Activated naive CD4-positive, alpha-beta T cell treated with anti-CD3 and anti-CD28 coated beads for 36 hours (primary cell): ENCODE measurements at regions of chr3 and their contacts with region 1.

Region 1: GRCh38 chr3:136752422-136753325 is 496 bp upstream of the STAG1 start:
- DNase-seq: peak; percentile 99
- H3K4me3 Mint-ChIP-seq: peak overlapping the region; percentile 86
- H3K27ac Mint-ChIP-seq: peak overlapping the region; percentile 97
- H3K4me1 Mint-ChIP-seq: peaks cover 29% of the 10 kb centered on the region
- H3K27me3 Mint-ChIP-seq: no peaks in the 10 kb centered on the region

Region 2: DNA sequence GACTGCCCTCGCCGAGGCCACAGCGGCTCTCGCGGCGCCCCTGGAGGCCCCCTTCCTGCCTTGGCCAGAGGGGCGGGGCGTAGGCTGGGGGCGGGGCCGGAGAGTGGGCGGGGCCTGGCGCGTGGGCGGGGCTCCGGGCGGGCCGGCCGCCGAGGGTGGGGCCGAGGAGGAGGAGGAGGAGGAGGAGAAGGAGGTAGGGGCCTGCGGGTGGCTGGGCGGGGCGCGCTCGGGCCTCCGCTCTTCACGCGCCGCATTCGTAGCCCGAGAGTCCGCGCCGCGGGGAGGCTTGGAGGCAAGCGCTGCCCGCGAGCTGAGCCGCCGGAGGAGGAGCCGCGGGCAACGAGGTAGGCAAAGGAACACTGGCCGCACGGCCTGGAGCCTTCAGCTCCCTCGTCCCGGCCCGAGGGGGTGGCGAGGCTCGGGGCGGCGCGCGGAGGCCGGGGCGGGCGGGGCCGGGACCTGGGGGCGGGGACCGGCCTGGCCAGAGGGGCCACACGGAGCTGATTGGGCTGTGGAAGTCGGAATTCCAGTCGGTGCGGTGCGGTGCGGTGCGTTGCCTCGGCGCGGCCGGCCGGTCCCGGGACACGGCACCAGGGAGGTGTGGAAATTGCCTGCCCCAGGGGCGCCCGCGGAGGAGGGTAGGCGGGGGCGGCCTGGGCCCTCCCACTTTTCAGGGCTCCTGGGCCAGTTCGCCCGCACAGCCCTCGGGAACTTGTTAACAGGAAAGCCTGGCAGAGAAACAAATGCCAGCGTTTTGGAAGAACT is 787.0 kb before region 1 on chr3 and contains the start of gene PPP2R3A:
- CTCF ChIA-PET with region 1: interaction called, 3 read pairs
- intact Hi-C with region 1: loop called (anchors 1 kb)
- DNase-seq: peak; percentile 70
- H3K4me3 Mint-ChIP-seq: peak within 1 kb of the TSS; percentile 74
- H3K27ac Mint-ChIP-seq: no peak within 1 kb of the TSS
- H3K4me1 Mint-ChIP-seq: peaks cover 8% of the 10 kb centered on the region
- H3K27me3 Mint-ChIP-seq: peaks cover 37% of the 10 kb centered on the region
- total RNA-seq, gene PPP2R3A: 0.17 TPM

Region 3: GRCh38 chr3:136250226-136250902 is 502.3 kb before region 1 on chr3 and contains the start of gene PCCB:
- CTCF ChIA-PET with region 1: no interaction called
- intact Hi-C with region 1: loop called (anchors 1 kb)
- DNase-seq: peak; percentile 95
- H3K4me3 Mint-ChIP-seq: peak within 1 kb of the TSS; percentile 83
- H3K27ac Mint-ChIP-seq: peak within 1 kb of the TSS; percentile 90
- H3K4me1 Mint-ChIP-seq: peaks cover 18% of the 10 kb centered on the region
- H3K27me3 Mint-ChIP-seq: no peaks in the 10 kb centered on the region
- total RNA-seq, gene PCCB: 86.0 to 87.6 TPM

Region 4: DNA sequence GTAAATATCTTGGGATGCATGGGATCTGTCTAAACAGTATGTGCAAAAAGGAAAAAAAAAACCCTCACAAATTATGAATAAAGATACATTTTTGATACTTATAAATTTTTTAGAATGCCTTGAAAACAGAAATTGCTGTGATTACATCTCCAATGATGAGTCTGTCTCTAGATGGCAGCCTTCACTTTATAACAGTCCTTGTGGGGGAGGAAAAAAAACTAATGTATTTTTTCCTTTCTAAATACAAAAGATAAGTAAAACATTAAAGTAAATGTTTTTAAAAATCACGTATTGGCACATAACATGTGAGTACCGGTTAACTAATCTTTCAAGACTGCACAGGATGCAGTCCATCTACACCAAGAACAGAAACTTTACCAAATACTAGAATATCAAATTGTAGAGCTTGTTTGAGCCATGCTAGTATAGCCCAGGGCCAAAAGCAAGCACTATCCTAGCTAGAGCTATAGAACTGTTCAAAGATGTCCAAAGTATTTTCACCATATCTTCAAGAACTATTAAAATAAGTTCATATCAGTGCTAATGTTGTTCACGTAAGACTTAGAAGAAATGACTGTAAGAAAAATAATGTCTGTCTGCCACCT is 206.9 kb before region 1 on chr3:
- CTCF ChIA-PET with region 1: interaction called, 6 read pairs
- intact Hi-C with region 1: loop called (anchors 1 kb)
- DNase-seq: no peak
- H3K4me3 Mint-ChIP-seq: no peak overlapping the region
- H3K27ac Mint-ChIP-seq: no peak overlapping the region
- H3K4me1 Mint-ChIP-seq: peaks cover 12% of the 10 kb centered on the region
- H3K27me3 Mint-ChIP-seq: no peaks in the 10 kb centered on the region

Region 5: DNA sequence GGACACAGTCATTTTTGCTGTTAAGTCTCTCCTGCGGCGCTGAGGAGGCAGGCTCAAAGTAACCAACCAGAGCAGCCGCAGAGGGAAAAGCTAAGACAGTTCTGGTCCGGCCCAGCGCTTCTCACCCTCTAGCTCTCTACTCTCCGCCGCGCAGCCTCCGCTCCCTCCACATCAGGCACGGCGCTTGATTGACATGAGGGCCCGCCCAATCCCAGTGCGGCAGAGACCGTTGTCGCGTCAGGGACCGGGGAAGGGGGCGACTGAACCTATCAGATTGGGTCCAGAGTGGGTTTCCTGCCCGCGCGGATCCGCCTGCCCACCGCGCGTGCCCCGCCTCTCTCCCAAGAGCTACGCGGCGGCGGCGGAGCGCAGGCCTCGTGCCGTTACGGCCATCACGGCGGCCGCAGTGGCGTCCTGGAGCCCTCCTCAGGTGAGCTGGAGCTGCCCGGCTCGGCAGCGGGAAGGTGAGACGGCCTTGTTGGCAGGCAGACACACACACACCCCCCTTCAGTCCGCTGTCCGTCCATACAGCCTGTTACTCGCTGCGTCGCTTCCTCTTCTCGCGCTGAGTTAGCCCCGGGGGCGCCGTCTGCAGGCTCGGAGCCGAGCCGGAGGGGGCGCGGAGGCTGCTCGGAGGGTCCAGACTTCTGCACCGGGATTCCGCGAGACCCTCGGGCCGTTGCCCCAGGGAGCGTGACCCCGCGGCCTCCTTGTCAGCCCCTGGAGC is 109.4 kb after region 1 on chr3 and contains the start of gene NCK1:
- CTCF ChIA-PET with region 1: interaction called, 17 read pairs
- intact Hi-C with region 1: loop called (anchors 1 kb)
- DNase-seq: peak; percentile 99
- H3K4me3 Mint-ChIP-seq: peak within 1 kb of the TSS; percentile 94
- H3K27ac Mint-ChIP-seq: peak within 1 kb of the TSS; percentile 95
- H3K4me1 Mint-ChIP-seq: peaks cover 41% of the 10 kb centered on the region
- H3K27me3 Mint-ChIP-seq: no peaks in the 10 kb centered on the region
- total RNA-seq, gene NCK1: 24.1 to 29.2 TPM

Region 6: GRCh38 chr3:137032465-137033120 is 279.9 kb after region 1 on chr3:
- CTCF ChIA-PET with region 1: interaction called, 4 read pairs
- intact Hi-C with region 1: loop called (anchors 5 kb)
- DNase-seq: peak; percentile 91
- H3K4me3 Mint-ChIP-seq: peak overlapping the region; percentile 40
- H3K27ac Mint-ChIP-seq: no peak overlapping the region
- H3K4me1 Mint-ChIP-seq: peaks cover 7% of the 10 kb centered on the region
- H3K27me3 Mint-ChIP-seq: peaks cover 15% of the 10 kb centered on the region